H1 (cell line): ENCODE measurements at regions of chr12 and their contacts with region 1.

Region 1: DNA sequence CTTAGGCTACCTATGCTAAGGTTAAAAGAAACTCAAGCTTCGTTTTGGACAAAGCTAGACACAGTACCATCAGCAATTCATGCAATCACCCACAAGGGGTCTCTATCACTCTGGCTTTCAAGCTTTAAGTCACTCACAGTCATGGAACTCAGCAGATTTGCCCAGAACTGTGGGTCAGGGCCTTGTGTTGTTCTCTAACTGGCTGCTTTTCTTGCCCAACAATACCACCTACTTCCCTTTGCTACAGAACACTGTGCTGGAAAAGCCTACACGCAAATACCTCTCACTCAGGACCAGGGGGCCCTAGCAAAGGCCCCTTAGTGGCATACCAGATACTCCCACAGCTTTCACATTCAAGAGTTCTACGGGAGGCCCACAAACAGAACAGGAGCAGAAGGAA is 9.1 kb downstream of the NEMP1 start:
- DNase-seq: no peak
- H3K4me3 ChIP-seq: no peak overlapping the region
- H3K27ac ChIP-seq: no peak overlapping the region
- H3K4me1 ChIP-seq: no peaks in the 10 kb centered on the region
- H3K27me3 ChIP-seq: no peaks in the 10 kb centered on the region
- CTCF ChIP-seq: peak in 2 of 3 experiments; percentile 90 to 94; a peak in 3 of 4 replicates
- EP300 ChIP-seq: no peak
- POLR2A ChIP-seq: no peak
- RAD21 ChIP-seq: peak; percentile 95 to 97

Region 2: GRCh38 chr12:57046947-57047890 is 22.3 kb before region 1 on chr12:
- CTCF ChIA-PET with region 1: interaction called, 77 read pairs
- POLR2A ChIA-PET with region 1: interaction called, 6 read pairs
- DNase-seq: no peak
- H3K4me3 ChIP-seq: no peak overlapping the region
- H3K27ac ChIP-seq: no peak overlapping the region
- H3K4me1 ChIP-seq: no peaks in the 10 kb centered on the region
- H3K27me3 ChIP-seq: no peaks in the 10 kb centered on the region
- CTCF ChIP-seq: no peak
- EP300 ChIP-seq: no peak
- POLR2A ChIP-seq: no peak
- RAD21 ChIP-seq: no peak

Region 3: GRCh38 chr12:57096099-57096572 is 26.6 kb after region 1 on chr12:
- CTCF ChIA-PET with region 1: interaction called, 206 read pairs
- POLR2A ChIA-PET with region 1: interaction called, 127 read pairs
- DNase-seq: no peak
- H3K4me3 ChIP-seq: no peak overlapping the region
- H3K27ac ChIP-seq: no peak overlapping the region
- H3K4me1 ChIP-seq: peaks cover 0 to 21% (median 15%) of the 10 kb centered on the region in 4 experiments; a peak in 6 of 7 replicates
- H3K27me3 ChIP-seq: no peaks in the 10 kb centered on the region
- CTCF ChIP-seq: no peak
- EP300 ChIP-seq: no peak
- POLR2A ChIP-seq: no peak
- RAD21 ChIP-seq: no peak

Region 4: GRCh38 chr12:57118711-57119271 is 49.3 kb after region 1 on chr12:
- CTCF ChIA-PET with region 1: interaction called, 225 read pairs
- POLR2A ChIA-PET with region 1: interaction called, 6 read pairs
- DNase-seq: no peak
- H3K4me3 ChIP-seq: no peak overlapping the region
- H3K27ac ChIP-seq: no peak overlapping the region
- H3K4me1 ChIP-seq: no peaks in the 10 kb centered on the region
- H3K27me3 ChIP-seq: peaks cover 0 to 2% (median under 1%) of the 10 kb centered on the region in 4 experiments; a peak in 1 of 7 replicates
- CTCF ChIP-seq: no peak
- EP300 ChIP-seq: no peak
- POLR2A ChIP-seq: no peak
- RAD21 ChIP-seq: no peak

Region 5: GRCh38 chr12:57166971-57167371 is 97.4 kb after region 1 on chr12:
- CTCF ChIA-PET with region 1: no interaction called
- POLR2A ChIA-PET with region 1: no interaction called
- DNase-seq: no peak
- H3K4me3 ChIP-seq: no peak overlapping the region
- H3K27ac ChIP-seq: no peak overlapping the region
- H3K4me1 ChIP-seq: no peaks in the 10 kb centered on the region
- H3K27me3 ChIP-seq: no peaks in the 10 kb centered on the region
- CTCF ChIP-seq: no peak
- EP300 ChIP-seq: no peak
- POLR2A ChIP-seq: no peak
- RAD21 ChIP-seq: no peak

Region 6: GRCh38 chr12:57276935-57277563 is 207.5 kb after region 1 on chr12:
- CTCF ChIA-PET with region 1: no interaction called
- POLR2A ChIA-PET with region 1: no interaction called
- DNase-seq: no peak
- H3K4me3 ChIP-seq: no peak overlapping the region
- H3K27ac ChIP-seq: no peak overlapping the region
- H3K4me1 ChIP-seq: 0 out of 7 replicates have a peak, but pooled peaks cover 0 to 2% (median 0%) of the 10 kb centered on the region in 4 experiments
- H3K27me3 ChIP-seq: no peaks in the 10 kb centered on the region
- CTCF ChIP-seq: peak; percentile 39 to 58 (median 52)
- EP300 ChIP-seq: no peak
- POLR2A ChIP-seq: no peak
- RAD21 ChIP-seq: peak; percentile 29 to 52; a peak in 3 of 4 replicates